ENCODE measurements at regions of chr4 and their contacts with region 1.

Region 1: GRCh38 chr4:83284193-83285054 is at the start of gene COQ2:
- DNase-seq: peak; percentile 96
- ATAC-seq: peak; percentile 94
- H3K4me3 Mint-ChIP-seq: peak within 1 kb of the TSS; percentile 97
- H3K27ac Mint-ChIP-seq: peak within 1 kb of the TSS; percentile 100
- H3K4me1 Mint-ChIP-seq: peaks cover 49% of the 10 kb centered on the region
- H3K27me3 Mint-ChIP-seq: no peaks in the 10 kb centered on the region
- total RNA-seq, gene COQ2: 21.3 to 21.9 TPM

Region 2: DNA sequence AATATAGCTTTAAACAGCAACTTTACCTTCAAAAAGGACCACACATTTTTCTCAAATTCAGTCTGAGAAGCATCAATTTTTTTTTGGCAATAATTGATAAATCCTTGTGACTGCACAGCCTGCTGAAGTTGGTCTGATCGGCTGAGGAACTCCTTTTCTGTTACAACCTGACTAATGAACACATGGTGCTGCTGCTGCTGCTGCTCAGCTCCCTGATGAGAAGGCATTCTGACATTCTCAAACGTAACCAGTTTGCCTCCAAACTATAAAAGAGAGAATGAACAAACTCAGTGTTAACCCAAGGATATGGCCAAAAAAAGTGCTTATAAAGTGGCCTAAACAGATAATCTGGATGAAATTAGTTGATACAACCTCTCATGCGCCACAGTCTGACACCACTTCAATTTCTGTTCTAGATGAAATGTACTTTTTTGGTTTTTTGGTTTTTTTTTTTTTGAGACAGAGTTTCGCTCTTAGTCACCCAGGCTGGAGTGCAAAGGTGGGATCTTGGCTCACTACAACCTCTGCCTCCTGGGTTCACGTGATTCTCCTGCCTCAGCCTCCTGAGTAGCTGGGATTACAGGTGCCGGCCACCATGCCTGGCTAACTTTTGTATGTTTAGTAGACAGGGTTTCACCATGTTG is 420.0 kb before region 1 on chr4:
- CTCF ChIA-PET with region 1: no interaction called
- POLR2A ChIA-PET with region 1: no interaction called
- DNase-seq: peak; percentile 35
- ATAC-seq: peak; percentile 70
- H3K4me3 Mint-ChIP-seq: peak overlapping the region; percentile 20
- H3K27ac Mint-ChIP-seq: peak overlapping the region; percentile 83
- H3K4me1 Mint-ChIP-seq: peaks cover 40% of the 10 kb centered on the region
- H3K27me3 Mint-ChIP-seq: no peaks in the 10 kb centered on the region

Region 3: DNA sequence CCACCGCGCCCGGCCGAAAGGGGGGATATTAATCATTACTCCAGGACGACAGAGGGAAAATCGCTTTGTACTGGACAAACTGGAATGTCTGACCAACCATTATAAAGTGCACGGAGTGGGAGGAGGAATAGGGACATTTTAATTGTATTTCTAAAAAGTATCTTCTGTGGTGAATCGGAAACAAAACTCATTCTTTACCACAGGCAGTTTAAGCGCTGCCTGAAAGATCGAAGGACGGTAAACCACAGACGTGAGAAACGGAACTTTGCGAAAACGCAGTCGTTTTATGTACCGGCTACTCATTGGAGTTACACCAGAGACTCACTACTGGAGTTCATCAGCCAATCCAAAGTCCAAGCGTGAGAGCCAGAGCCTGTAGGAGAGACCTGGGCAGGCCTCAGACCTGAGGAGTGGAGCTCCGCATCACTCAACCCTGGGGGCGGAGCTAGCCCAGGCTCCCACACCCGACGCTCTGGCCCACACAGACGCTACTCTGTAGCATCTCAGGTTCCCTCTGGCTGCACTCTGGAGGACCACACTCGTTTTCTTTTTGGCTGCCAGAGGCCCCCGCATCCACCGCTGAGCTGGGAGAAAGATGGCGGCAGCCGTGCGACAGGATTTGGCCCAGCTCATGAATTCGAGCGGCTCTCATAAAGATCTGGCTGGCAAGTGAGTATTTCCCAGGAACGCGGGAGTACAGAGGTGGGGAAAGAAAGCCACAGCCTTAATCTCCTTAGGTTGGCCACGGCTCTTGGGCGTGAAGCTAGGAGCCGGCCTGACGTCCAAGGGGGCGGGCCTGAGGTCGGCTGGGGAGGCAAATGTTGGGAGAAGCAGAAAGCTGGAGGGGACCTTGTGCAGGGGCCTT is 249.6 kb before region 1 on chr4 and contains the start of gene COPS4:
- CTCF ChIA-PET with region 1: interaction called, 13 read pairs
- POLR2A ChIA-PET with region 1: interaction called, 8 read pairs
- DNase-seq: peak; percentile 98
- ATAC-seq: peak; percentile 99
- H3K4me3 Mint-ChIP-seq: peak within 1 kb of the TSS; percentile 91
- H3K27ac Mint-ChIP-seq: peak within 1 kb of the TSS; percentile 98
- H3K4me1 Mint-ChIP-seq: peaks cover 24% of the 10 kb centered on the region
- H3K27me3 Mint-ChIP-seq: peaks cover 5% of the 10 kb centered on the region
- total RNA-seq, gene COPS4: 33.7 to 34.6 TPM

Region 4: DNA sequence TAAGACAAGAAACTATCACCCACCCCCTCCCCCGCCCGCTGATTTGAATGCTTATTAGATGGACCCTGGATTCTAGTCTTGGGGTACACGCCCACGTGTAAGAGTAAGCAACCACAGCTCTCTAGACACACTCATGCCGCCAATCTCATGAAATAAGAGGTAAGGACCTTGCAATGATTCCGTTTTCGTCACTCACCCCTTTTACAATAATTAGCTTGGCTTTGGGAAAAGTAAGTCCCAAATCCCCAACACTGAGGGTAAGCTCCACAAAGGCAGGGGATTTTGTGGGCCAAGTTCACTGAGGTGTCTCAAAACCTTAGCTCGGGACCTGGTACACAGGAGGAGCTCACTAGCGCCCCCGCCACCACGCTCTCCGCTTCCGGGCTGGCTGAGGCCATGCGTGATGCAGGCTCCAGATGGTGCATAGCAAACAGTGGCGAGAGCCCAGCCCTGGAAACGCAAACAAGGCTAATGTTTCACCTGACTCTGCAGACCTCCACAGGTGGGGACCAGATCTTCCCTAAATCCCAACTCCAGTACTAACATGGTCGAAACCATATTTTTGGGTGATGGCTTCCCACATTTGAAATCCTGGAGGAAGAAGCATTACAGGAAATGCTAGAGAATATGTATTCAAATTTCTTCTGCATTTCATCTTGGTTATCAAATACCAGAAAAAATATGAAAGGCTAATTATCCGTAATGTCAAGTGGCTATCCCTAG is 174.0 kb before region 1 on chr4:
- CTCF ChIA-PET with region 1: interaction called, 18 read pairs
- POLR2A ChIA-PET with region 1: interaction called, 5 read pairs
- DNase-seq: peak; percentile 94
- ATAC-seq: peak; percentile 80
- H3K4me3 Mint-ChIP-seq: peak overlapping the region; percentile 93
- H3K27ac Mint-ChIP-seq: peak overlapping the region; percentile 96
- H3K4me1 Mint-ChIP-seq: peaks cover 56% of the 10 kb centered on the region
- H3K27me3 Mint-ChIP-seq: no peaks in the 10 kb centered on the region

Region 5: GRCh38 chr4:83267121-83267829 is 17.1 kb before region 1 on chr4:
- CTCF ChIA-PET with region 1: interaction called, 46 read pairs
- POLR2A ChIA-PET with region 1: interaction called, 5 read pairs
- DNase-seq: no peak
- ATAC-seq: no peak
- H3K4me3 Mint-ChIP-seq: no peak overlapping the region
- H3K27ac Mint-ChIP-seq: no peak overlapping the region
- H3K4me1 Mint-ChIP-seq: peaks cover 19% of the 10 kb centered on the region
- H3K27me3 Mint-ChIP-seq: no peaks in the 10 kb centered on the region

Region 6: DNA sequence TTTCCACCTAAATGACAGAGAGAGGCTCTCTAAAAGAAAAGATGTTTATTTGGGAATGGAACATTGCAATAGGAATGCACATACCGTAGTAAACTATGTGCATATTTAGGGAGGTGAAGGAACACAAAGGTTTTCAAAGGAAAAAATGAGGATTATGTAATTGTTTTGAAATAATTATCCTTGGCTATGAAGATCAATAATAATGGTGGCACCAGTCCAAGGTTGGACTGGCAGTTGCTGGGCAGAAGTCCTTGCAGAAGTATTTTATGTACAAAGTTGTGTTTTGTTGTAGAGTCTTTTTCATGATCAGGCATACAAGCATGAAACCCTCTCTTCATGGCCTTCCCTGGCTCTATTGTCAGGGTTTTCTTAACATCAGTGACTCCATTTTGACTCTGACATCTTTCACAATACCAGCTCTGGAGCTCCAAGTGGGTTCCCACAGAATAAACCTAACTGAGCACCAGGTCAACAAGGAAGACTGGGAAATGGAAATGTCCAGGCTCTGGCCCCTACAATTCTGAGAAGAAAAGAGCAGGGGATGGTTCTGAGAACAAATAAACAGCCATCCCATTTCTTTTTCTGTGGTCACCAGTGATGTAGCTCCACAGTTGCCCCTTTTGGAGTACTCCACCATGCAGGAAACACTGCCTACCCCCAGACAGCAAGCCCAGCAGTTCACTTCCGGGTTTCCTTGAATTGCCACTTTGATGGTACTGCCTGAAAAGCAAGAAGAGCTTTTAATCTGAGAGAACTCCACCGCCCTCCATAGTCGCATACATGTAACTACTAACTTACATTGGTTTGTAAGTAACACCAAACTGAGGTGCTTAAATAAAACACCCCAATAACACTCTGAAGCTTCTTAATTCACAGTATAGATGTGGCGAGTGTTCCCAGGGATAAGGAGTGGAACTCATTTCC is 103.6 kb after region 1 on chr4:
- CTCF ChIA-PET with region 1: interaction called, 82 read pairs
- POLR2A ChIA-PET with region 1: interaction called, 16 read pairs
- DNase-seq: peak; percentile 76
- ATAC-seq: peak; percentile 94
- H3K4me3 Mint-ChIP-seq: no peak overlapping the region
- H3K27ac Mint-ChIP-seq: peak overlapping the region; percentile 77
- H3K4me1 Mint-ChIP-seq: peaks cover 18% of the 10 kb centered on the region
- H3K27me3 Mint-ChIP-seq: no peaks in the 10 kb centered on the region

Region 7: DNA sequence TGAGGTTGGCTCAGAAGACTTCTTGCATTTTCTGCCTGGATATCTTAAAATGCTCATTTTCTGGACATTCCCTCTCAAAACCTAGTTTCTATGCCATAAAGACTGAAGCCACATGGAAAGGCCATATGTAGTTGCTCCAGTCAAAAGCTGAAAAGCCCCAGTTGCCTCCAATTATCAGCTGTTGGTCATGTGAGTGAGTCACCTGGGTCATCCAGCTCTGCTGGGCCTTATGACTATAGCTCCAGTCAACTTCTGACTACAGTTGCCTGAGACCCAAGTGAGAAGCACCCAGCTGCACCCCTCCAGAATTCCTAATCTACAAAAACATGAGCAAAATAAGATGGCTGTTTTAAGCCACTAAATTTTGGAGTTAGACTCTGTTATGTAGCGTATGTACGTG is 129.3 kb after region 1 on chr4:
- CTCF ChIA-PET with region 1: no interaction called
- POLR2A ChIA-PET with region 1: no interaction called
- DNase-seq: no peak
- ATAC-seq: no peak
- H3K4me3 Mint-ChIP-seq: no peak overlapping the region
- H3K27ac Mint-ChIP-seq: no peak overlapping the region
- H3K4me1 Mint-ChIP-seq: no peaks in the 10 kb centered on the region
- H3K27me3 Mint-ChIP-seq: no peaks in the 10 kb centered on the region

Region 8: GRCh38 chr4:83436680-83437079 is 152.3 kb after region 1 on chr4:
- CTCF ChIA-PET with region 1: no interaction called
- POLR2A ChIA-PET with region 1: no interaction called
- DNase-seq: no peak
- ATAC-seq: no peak
- H3K4me3 Mint-ChIP-seq: no peak overlapping the region
- H3K27ac Mint-ChIP-seq: no peak overlapping the region
- H3K4me1 Mint-ChIP-seq: no peaks in the 10 kb centered on the region
- H3K27me3 Mint-ChIP-seq: no peaks in the 10 kb centered on the region

Region 9: GRCh38 chr4:83516042-83516772 is 231.8 kb after region 1 on chr4:
- CTCF ChIA-PET with region 1: no interaction called
- POLR2A ChIA-PET with region 1: no interaction called
- DNase-seq: no peak
- ATAC-seq: no peak
- H3K4me3 Mint-ChIP-seq: no peak overlapping the region
- H3K27ac Mint-ChIP-seq: no peak overlapping the region
- H3K4me1 Mint-ChIP-seq: no peaks in the 10 kb centered on the region
- H3K27me3 Mint-ChIP-seq: no peaks in the 10 kb centered on the region